ENCODE measurements at regions of chr4 and their contacts with region 1.

Region 1: GRCh38 chr4:53908661-53909078 is 155.7 kb downstream of the CHIC2 start:
- DNase-seq: peak in 1 of 2 donors; percentile 59
- ATAC-seq: peak; percentile 80 to 93 (median 91)
- H3K4me3 ChIP-seq: peak overlapping the region in 7 of 10 donors; percentile 8 to 30 (median 23)
- H3K27ac ChIP-seq: peak overlapping the region in 7 of 10 donors; percentile 10 to 66 (median 51)
- H3K4me1 ChIP-seq: peaks cover 4 to 39% (median 26%) of the 10 kb centered on the region in 9 donors
- H3K27me3 ChIP-seq: peaks cover 0 to 52% (median 27%) of the 10 kb centered on the region in 7 donors
- CTCF ChIP-seq: peak; percentile 7 to 89 (median 74)

Region 2: GRCh38 chr4:53015681-53016080 is 893.0 kb before region 1 on chr4:
- intact Hi-C with region 1: loop called in 3 of 10 experiments (anchors 10 kb)
- DNase-seq: peak in 1 of 2 donors; percentile 38
- ATAC-seq: peak in 1 of 8 donors; percentile 29
- H3K4me3 ChIP-seq: no peak overlapping the region
- H3K27ac ChIP-seq: no peak overlapping the region
- H3K4me1 ChIP-seq: peaks cover 6 to 70% (median 55%) of the 10 kb centered on the region in 9 donors
- H3K27me3 ChIP-seq: no peaks in the 10 kb centered on the region
- CTCF ChIP-seq: peak; percentile 35 to 80 (median 66)

Region 3: GRCh38 chr4:53507671-53508286 is 400.9 kb before region 1 on chr4:
- intact Hi-C with region 1: loop called in 1 of 10 experiments (anchors 10 kb)
- DNase-seq: peak; percentile 72 to 74
- ATAC-seq: peak; percentile 83 to 95 (median 90)
- H3K4me3 ChIP-seq: peak overlapping the region in 7 of 10 donors; percentile 13 to 42 (median 35)
- H3K27ac ChIP-seq: peak overlapping the region; percentile 24 to 78 (median 72)
- H3K4me1 ChIP-seq: peaks cover 0 to 28% (median 9%) of the 10 kb centered on the region in 9 donors
- H3K27me3 ChIP-seq: no peaks in the 10 kb centered on the region
- CTCF ChIP-seq: no peak

Region 4: GRCh38 chr4:53714236-53715140 is 194.2 kb before region 1 on chr4:
- intact Hi-C with region 1: loop called in 7 of 10 experiments (anchors 5 to 10 kb)
- DNase-seq: no peak
- ATAC-seq: no peak
- H3K4me3 ChIP-seq: no peak overlapping the region
- H3K27ac ChIP-seq: peak overlapping the region in 1 of 10 donors; percentile 22
- H3K4me1 ChIP-seq: peaks cover 0 to 13% (median 0%) of the 10 kb centered on the region in 9 donors
- H3K27me3 ChIP-seq: peaks cover 0 to 4% (median 0%) of the 10 kb centered on the region in 7 donors
- CTCF ChIP-seq: no peak

Region 5: DNA sequence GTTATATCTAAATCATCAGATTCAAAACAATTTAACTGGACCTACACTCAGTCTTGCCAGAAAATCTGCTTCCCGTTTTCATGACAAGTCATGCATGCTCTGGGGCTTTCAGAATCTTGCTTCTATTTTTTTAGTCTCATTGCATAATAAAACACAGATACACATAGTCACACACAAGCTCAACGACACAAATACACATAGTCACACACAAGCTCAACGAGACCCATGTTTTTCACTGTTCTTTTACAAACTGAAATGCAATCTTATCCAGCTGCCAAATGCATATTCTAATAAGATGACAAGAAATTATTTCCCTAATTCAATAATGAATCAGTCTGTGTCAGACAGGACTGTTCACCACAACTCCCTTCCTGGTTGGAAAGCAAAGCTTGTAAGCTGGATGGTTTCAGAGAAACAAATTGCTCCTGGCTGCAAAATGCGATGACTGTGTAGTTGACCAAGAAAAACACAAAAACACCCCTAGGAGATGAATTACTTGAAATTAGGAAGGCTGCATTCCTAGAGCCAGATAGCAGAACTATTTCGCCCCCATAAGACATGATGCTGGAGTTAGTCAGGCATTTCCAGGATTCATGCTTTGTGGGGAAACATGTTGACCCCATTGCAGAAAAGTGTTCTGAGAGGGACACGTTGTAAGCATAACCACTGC is 53.0 kb before region 1 on chr4:
- intact Hi-C with region 1: loop called in 1 of 10 experiments (anchors 10 kb)
- DNase-seq: peak in 1 of 2 donors; percentile 27
- ATAC-seq: peak; percentile 62 to 90 (median 82)
- H3K4me3 ChIP-seq: no peak overlapping the region
- H3K27ac ChIP-seq: peak overlapping the region in 9 of 10 donors; percentile 37 to 79 (median 68)
- H3K4me1 ChIP-seq: peaks cover 0 to 4% (median 0%) of the 10 kb centered on the region in 9 donors
- H3K27me3 ChIP-seq: no peaks in the 10 kb centered on the region
- CTCF ChIP-seq: no peak

Region 6: DNA sequence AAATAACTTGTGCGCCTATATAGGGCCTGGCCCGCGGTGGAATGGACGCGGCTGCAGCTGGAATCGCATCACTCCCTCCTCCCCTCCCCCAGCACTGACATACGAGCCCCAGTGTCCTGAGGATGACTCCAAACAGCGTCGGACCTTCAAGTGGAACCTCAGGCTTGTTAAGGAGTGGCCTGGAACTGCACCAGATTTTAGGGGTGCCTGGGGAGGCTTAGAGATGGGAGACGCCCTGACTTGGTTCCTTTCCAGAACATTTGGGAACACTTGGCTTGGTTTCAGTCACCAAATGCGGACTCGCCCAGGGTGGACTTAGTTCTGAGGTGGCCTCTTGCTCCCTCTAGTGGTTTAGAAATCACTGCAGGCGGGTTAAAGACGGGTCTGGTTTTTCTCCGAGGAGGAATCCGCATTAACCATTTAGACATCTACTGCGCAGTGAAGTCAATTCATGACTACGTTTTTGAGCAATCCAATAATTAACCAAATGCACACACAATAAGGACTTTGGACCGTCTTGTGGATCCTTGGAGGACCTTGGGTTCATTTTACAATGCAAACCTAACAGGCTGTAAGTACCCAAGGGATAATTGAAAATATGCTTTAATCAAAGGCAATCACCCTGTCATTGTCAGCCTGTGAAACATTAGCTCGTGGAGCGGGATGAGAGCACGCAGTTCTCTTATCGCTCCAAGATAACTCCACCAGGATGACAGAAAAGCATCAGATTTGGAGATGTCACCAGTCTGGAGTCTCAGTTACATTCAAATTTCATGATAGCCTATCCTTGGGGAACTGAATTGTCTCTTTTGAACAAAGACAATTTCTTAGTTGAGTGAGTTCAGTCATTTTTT is 309.2 kb after region 1 on chr4:
- intact Hi-C with region 1: loop called in 4 of 10 experiments (anchors 1 to 10 kb)
- DNase-seq: peak; percentile 50 to 84
- ATAC-seq: peak; percentile 89 to 95 (median 91)
- H3K4me3 ChIP-seq: peak overlapping the region in 9 of 10 donors; percentile 3 to 52 (median 48)
- H3K27ac ChIP-seq: peak overlapping the region in 2 of 10 donors; percentile 7 to 67
- H3K4me1 ChIP-seq: peaks cover 0 to 19% (median 10%) of the 10 kb centered on the region in 9 donors
- H3K27me3 ChIP-seq: peaks cover 0 to 40% (median 29%) of the 10 kb centered on the region in 7 donors
- CTCF ChIP-seq: peak; percentile 84 to 97 (median 93)

Region 7: GRCh38 chr4:54228056-54228527 is 319.4 kb after region 1 on chr4:
- intact Hi-C with region 1: loop called in 7 of 10 experiments (anchors 2 to 10 kb)
- DNase-seq: peak; percentile 75 to 79
- ATAC-seq: peak; percentile 61 to 81 (median 68)
- H3K4me3 ChIP-seq: peak overlapping the region; percentile 4 to 64 (median 54)
- H3K27ac ChIP-seq: peak overlapping the region; percentile 6 to 85 (median 68)
- H3K4me1 ChIP-seq: peaks cover 5 to 74% (median 62%) of the 10 kb centered on the region in 9 donors
- H3K27me3 ChIP-seq: peaks cover 20 to 100% (median 98%) of the 10 kb centered on the region in 7 donors
- CTCF ChIP-seq: peak; percentile 49 to 87 (median 71)

Measured in heart right ventricle (tissue), 16 donors.